ENCODE measurements at regions of chr5 and their contacts with region 1.

Region 1: GRCh38 chr5:171850324-171851285 is 65.0 kb downstream of the SMIM23 start:
- DNase-seq: peak; percentile 20
- H3K4me3 ChIP-seq: no peak overlapping the region
- H3K27ac ChIP-seq: no peak overlapping the region
- H3K27me3 ChIP-seq: no peaks in the 10 kb centered on the region
- CTCF ChIP-seq: peak; percentile 64

Region 2: DNA sequence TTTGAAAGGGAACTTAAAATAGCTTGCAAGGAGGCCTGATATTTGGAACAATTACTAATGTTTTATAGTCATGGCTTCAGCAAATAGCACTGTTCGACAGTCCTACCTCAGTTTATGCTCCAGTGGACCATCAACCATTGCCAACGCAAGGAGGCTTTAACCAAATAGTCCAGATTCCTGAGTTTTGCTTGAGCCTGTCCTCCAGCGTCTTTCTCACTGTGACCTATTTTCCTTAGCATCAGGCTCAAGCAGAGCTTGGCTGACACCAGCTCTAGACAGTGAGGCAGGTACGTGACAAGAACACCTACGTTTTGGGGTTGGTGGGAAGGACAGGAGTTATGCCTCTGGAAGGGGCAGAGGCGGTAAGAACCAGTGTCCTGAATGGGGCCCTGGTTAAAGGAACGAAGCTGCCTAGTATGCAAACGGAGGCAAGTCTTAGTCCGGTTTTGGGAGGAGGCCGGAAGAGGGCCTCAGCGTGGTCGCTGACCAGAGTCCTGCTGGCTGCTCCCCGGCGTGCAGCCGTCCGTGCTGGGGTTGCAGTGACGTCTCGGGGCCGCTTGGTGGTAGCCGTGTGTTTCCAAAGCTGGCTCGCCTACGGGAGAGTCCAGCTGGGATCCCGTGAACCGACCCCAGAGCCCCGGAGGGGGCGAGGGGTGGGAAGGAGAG is 432.2 kb before region 1 on chr5:
- in situ Hi-C with region 1: loop called (anchors 25 kb)
- DNase-seq: peak; percentile 79
- H3K4me3 ChIP-seq: peak overlapping the region; percentile 40
- H3K27ac ChIP-seq: no peak overlapping the region
- H3K27me3 ChIP-seq: peaks cover 10% of the 10 kb centered on the region
- CTCF ChIP-seq: peak; percentile 96

Region 3: GRCh38 chr5:172235132-172235780 is 384.7 kb after region 1 on chr5:
- in situ Hi-C with region 1: no loop called
- DNase-seq: no peak
- H3K4me3 ChIP-seq: no peak overlapping the region
- H3K27ac ChIP-seq: no peak overlapping the region
- H3K27me3 ChIP-seq: no peaks in the 10 kb centered on the region
- CTCF ChIP-seq: no peak